Activated CD4-positive, alpha-beta memory T cell treated with anti-CD3 and anti-CD28 coated beads for 36 hours (primary cell): ENCODE measurements at regions of chr16 and their contacts with region 1.

Region 1: GRCh38 chr16:67561824-67562525 is 351 bp upstream of the CTCF start:
- DNase-seq: peak; percentile 99
- H3K4me3 Mint-ChIP-seq: peak overlapping the region; percentile 88
- H3K27ac Mint-ChIP-seq: peak overlapping the region; percentile 92
- H3K4me1 Mint-ChIP-seq: peaks cover 43% of the 10 kb centered on the region
- H3K27me3 Mint-ChIP-seq: no peaks in the 10 kb centered on the region

Region 2: GRCh38 chr16:67028555-67029248 is 533.3 kb before region 1 on chr16 and contains the start of gene CBFB:
- CTCF ChIA-PET with region 1: no interaction called
- POLR2A ChIA-PET with region 1: no interaction called
- intact Hi-C with region 1: loop called (anchors 5 kb)
- DNase-seq: peak; percentile 94
- H3K4me3 Mint-ChIP-seq: peak within 1 kb of the TSS; percentile 89
- H3K27ac Mint-ChIP-seq: peak within 1 kb of the TSS; percentile 93
- H3K4me1 Mint-ChIP-seq: peaks cover 39% of the 10 kb centered on the region
- H3K27me3 Mint-ChIP-seq: no peaks in the 10 kb centered on the region
- total RNA-seq, gene CBFB: 155 to 163 TPM

Region 3: DNA sequence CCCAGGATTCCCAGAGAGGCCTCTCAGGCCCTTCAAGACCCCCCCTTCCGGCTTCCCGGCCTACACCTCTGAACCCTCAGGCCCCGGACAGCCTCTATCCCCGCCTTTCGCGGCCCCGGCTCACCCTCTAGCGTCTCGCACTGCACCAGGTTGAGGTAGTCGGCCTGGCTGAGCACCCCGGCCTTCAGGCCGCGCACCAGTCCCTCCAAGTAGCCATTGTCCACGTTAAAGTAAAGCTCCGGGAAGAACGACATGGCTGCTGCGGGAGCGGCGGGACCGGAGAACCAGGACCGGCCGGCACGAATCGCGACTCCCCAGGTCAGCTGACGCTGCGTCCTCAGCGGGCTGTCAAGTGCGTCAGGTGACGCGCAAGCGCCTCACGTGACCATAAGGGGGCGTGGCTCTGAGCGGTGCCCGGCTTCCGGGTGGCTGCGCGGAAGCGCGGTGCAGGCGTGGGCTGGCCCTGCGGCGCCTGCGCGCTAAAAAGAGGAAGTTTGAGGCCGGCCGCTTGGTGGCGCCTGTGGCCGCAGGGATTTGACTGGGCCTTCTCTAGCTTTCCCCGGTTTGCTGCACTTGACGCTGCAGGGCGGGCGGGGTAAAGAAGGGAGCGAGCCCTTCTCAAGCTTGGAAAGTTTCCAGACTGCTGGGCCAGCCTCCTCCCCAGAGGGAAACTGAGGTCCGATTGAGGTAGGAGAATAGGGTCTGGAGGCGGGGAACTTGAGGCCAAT is 81.0 kb before region 1 on chr16 and contains the start of gene ATP6V0D1:
- CTCF ChIA-PET with region 1: interaction called, 7 read pairs
- POLR2A ChIA-PET with region 1: interaction called, 7 read pairs
- intact Hi-C with region 1: loop called (anchors 1 kb)
- DNase-seq: peak; percentile 99
- H3K4me3 Mint-ChIP-seq: peak within 1 kb of the TSS; percentile 99
- H3K27ac Mint-ChIP-seq: peak within 1 kb of the TSS; percentile 97
- H3K4me1 Mint-ChIP-seq: peaks cover 43% of the 10 kb centered on the region
- H3K27me3 Mint-ChIP-seq: no peaks in the 10 kb centered on the region
- total RNA-seq, gene ATP6V0D1: 25.0 to 26.3 TPM

Region 4: DNA sequence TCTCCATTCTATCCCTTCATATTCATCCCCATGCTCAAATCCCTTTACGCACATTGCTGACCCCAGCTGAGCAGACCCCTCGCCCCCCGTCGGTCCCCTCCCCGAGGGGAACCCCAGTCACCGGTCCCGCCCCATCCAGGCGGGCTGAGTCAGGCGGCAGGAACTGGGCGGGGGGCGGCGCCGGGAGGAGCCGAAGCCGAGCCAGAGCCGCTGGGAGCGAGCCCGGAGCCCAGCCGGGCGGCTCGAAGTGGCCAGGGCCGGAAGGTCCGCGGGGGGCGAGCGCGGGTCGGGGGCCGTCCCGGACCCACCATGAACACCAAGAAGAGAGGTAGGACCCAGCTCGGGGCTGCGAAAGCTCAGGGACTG is 24.7 kb before region 1 on chr16:
- CTCF ChIA-PET with region 1: interaction called, 4 read pairs
- POLR2A ChIA-PET with region 1: interaction called, 15 read pairs
- intact Hi-C with region 1: no loop called
- DNase-seq: peak; percentile 74
- H3K4me3 Mint-ChIP-seq: peak overlapping the region; percentile 76
- H3K27ac Mint-ChIP-seq: peak overlapping the region; percentile 26
- H3K4me1 Mint-ChIP-seq: peaks cover 15% of the 10 kb centered on the region
- H3K27me3 Mint-ChIP-seq: no peaks in the 10 kb centered on the region

Region 5: GRCh38 chr16:67608364-67608763 is 46.4 kb after region 1 on chr16:
- CTCF ChIA-PET with region 1: no interaction called
- POLR2A ChIA-PET with region 1: no interaction called
- intact Hi-C with region 1: loop called (anchors 1 kb)
- DNase-seq: no peak
- H3K4me3 Mint-ChIP-seq: no peak overlapping the region
- H3K27ac Mint-ChIP-seq: peak overlapping the region; percentile 63
- H3K4me1 Mint-ChIP-seq: peaks cover 23% of the 10 kb centered on the region
- H3K27me3 Mint-ChIP-seq: no peaks in the 10 kb centered on the region

Region 6: GRCh38 chr16:67660564-67661028 is 98.6 kb after region 1 on chr16 and contains the start of gene PARD6A:
- CTCF ChIA-PET with region 1: interaction called, 11 read pairs
- POLR2A ChIA-PET with region 1: interaction called, 32 read pairs
- intact Hi-C with region 1: loop called (anchors 1 kb)
- DNase-seq: peak; percentile 98
- H3K4me3 Mint-ChIP-seq: peak within 1 kb of the TSS; percentile 86
- H3K27ac Mint-ChIP-seq: peak within 1 kb of the TSS; percentile 87
- H3K4me1 Mint-ChIP-seq: peaks cover 27% of the 10 kb centered on the region
- H3K27me3 Mint-ChIP-seq: no peaks in the 10 kb centered on the region
- total RNA-seq, gene PARD6A: 11.2 to 11.5 TPM

Region 7: GRCh38 chr16:67841764-67842508 is 280.0 kb after region 1 on chr16 and contains the start of gene THAP11:
- CTCF ChIA-PET with region 1: interaction called, 5 read pairs
- POLR2A ChIA-PET with region 1: no interaction called
- intact Hi-C with region 1: loop called (anchors 1 kb)
- DNase-seq: peak; percentile 97
- H3K4me3 Mint-ChIP-seq: peak within 1 kb of the TSS; percentile 90
- H3K27ac Mint-ChIP-seq: peak within 1 kb of the TSS; percentile 95
- H3K4me1 Mint-ChIP-seq: peaks cover 34% of the 10 kb centered on the region
- H3K27me3 Mint-ChIP-seq: no peaks in the 10 kb centered on the region
- total RNA-seq, gene THAP11: 31.8 to 32.1 TPM

Region 8: GRCh38 chr16:68436581-68436980 is 874.6 kb after region 1 on chr16:
- CTCF ChIA-PET with region 1: no interaction called
- POLR2A ChIA-PET with region 1: no interaction called
- intact Hi-C with region 1: no loop called
- DNase-seq: no peak
- H3K4me3 Mint-ChIP-seq: no peak overlapping the region
- H3K27ac Mint-ChIP-seq: no peak overlapping the region
- H3K4me1 Mint-ChIP-seq: peaks cover 7% of the 10 kb centered on the region
- H3K27me3 Mint-ChIP-seq: no peaks in the 10 kb centered on the region